Lower lobe of right lung (tissue), 2 donors: ENCODE measurements at regions of chr6 and their contacts with region 1.

Region 1: GRCh38 chr6:144215932-144216667 is 65.8 kb downstream of the STX11 start:
- DNase-seq: peak; percentile 95
- ATAC-seq: peak; percentile 95 to 96
- H3K4me3 ChIP-seq: peak overlapping the region; percentile 62
- H3K27ac ChIP-seq: peak overlapping the region; percentile 98
- H3K4me1 ChIP-seq: peaks cover 31% of the 10 kb centered on the region
- H3K27me3 ChIP-seq: no peaks in the 10 kb centered on the region
- CTCF ChIP-seq: peak; percentile 80

Region 2: GRCh38 chr6:143755301-143755744 is 460.8 kb before region 1 on chr6:
- intact Hi-C with region 1: no loop called
- DNase-seq: no peak
- ATAC-seq: peak; percentile 52 to 66
- H3K4me3 ChIP-seq: no peak overlapping the region
- H3K27ac ChIP-seq: no peak overlapping the region
- H3K4me1 ChIP-seq: peaks cover 16% of the 10 kb centered on the region
- H3K27me3 ChIP-seq: no peaks in the 10 kb centered on the region
- CTCF ChIP-seq: no peak

Region 3: GRCh38 chr6:144066741-144067484 is 149.2 kb before region 1 on chr6:
- intact Hi-C with region 1: no loop called
- DNase-seq: no peak
- ATAC-seq: no peak
- H3K4me3 ChIP-seq: no peak overlapping the region
- H3K27ac ChIP-seq: no peak overlapping the region
- H3K4me1 ChIP-seq: peaks cover 18% of the 10 kb centered on the region
- H3K27me3 ChIP-seq: peaks cover 5% of the 10 kb centered on the region
- CTCF ChIP-seq: no peak

Region 4: GRCh38 chr6:144094731-144095330 is 121.3 kb before region 1 on chr6:
- intact Hi-C with region 1: no loop called
- DNase-seq: no peak
- ATAC-seq: peak; percentile 22 to 30
- H3K4me3 ChIP-seq: peak overlapping the region; percentile 75
- H3K27ac ChIP-seq: peak overlapping the region; percentile 86
- H3K4me1 ChIP-seq: peaks cover 22% of the 10 kb centered on the region
- H3K27me3 ChIP-seq: no peaks in the 10 kb centered on the region
- CTCF ChIP-seq: no peak

Region 5: DNA sequence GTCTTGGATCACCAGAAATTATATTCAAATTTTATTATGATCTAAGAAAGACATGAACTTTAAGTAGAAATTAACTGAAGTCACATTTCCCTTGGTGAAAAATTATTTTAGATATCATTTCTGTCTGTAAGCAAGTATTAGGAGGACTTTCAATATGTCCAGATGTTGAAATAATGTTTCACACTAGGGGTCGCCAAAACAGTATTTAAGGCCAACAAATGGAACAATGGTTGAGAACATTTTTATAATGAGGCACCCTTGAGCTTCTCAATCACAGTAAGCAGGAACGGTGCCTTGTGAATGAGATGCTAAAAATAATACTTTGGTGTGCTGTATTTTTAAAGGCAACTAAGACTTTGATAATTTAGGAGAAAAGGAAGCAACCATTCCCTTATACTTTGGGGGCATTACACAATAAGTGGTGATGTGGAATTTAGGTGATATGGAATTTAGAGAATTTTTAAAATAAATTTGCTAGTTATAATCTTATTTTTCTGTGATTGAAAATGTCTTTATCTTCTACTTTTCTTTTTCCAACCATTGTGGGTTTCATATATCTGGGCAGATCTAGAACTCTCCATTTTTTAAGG is 111.1 kb before region 1 on chr6:
- intact Hi-C with region 1: loop called (anchors 5 kb)
- DNase-seq: no peak
- ATAC-seq: peak; percentile 79 to 86
- H3K4me3 ChIP-seq: no peak overlapping the region
- H3K27ac ChIP-seq: no peak overlapping the region
- H3K4me1 ChIP-seq: peaks cover 6% of the 10 kb centered on the region
- H3K27me3 ChIP-seq: no peaks in the 10 kb centered on the region
- CTCF ChIP-seq: peak; percentile 75

Region 6: GRCh38 chr6:144519426-144519825 is 303.3 kb after region 1 on chr6:
- intact Hi-C with region 1: no loop called
- DNase-seq: no peak
- ATAC-seq: no peak
- H3K4me3 ChIP-seq: no peak overlapping the region
- H3K27ac ChIP-seq: no peak overlapping the region
- H3K4me1 ChIP-seq: no peaks in the 10 kb centered on the region
- H3K27me3 ChIP-seq: no peaks in the 10 kb centered on the region
- CTCF ChIP-seq: no peak